ENCODE measurements at regions of chr7 and their contacts with region 1.

Region 1: DNA sequence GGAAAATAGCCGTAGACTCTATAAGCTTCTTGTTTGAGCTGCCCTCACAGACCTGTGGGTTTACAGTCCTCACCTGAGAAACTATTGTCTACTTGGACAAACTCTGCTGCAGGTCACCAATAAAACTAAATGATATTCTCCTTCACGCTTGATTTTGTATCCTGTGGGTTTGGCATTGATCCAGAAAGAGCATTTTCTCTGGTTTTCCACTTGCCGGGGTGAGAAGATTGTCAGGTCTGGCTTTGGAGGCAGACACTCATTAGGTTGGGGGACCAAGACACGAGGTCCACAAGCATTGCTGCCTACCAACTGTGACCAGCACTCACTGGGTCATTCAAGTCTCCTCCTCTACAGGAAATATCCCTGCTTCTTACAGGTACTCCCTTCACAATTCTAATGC is 68.5 kb downstream of the CDC14C start:
- DNase-seq: no peak
- H3K4me3 ChIP-seq: no peak overlapping the region
- H3K4me1 ChIP-seq: no peaks in the 10 kb centered on the region
- H3K27me3 ChIP-seq: no peaks in the 10 kb centered on the region

Region 2: DNA sequence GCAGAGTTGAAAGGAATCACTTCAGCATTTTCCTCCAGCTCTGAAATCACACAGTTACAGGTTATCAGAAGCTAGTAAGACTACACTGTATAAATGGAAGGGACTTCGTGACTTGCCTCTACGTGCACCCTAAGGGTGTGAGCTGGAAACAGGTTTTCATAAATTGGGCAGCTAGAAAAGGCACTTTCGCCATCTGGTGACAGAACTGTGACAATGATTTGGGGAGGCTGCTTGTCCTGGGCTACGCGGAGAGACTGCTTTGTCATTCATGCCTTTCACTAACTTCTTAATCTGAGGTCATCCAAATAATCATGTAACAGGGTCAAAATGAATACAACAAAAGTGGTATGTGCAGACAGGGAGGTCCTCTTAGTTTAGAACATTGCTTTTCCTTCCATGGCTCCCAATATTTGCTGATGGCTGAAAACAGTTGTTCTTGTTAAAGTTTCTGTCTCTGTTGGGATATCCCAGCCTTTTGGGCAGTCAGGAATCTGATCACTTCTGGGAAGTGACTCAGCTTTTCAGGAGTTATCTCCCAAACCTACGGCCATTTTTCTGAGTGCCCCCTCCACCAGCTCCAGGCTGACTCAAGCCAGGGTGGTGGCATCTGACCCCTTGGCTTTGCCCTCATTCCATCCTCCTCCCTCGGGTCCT is 798.4 kb after region 1 on chr7:
- in situ Hi-C with region 1: loop called (anchors 25 kb)
- DNase-seq: peak; percentile 50 to 56
- H3K4me3 ChIP-seq: no peak overlapping the region
- H3K4me1 ChIP-seq: no peaks in the 10 kb centered on the region; the same call in 1 of the 2 replicates
- H3K27me3 ChIP-seq: no peaks in the 10 kb centered on the region

Region 3: GRCh38 chr7:49852619-49853462 is 860.0 kb after region 1 on chr7:
- in situ Hi-C with region 1: loop called (anchors 25 kb)
- DNase-seq: peak; percentile 36 to 52
- H3K4me3 ChIP-seq: no peak overlapping the region
- H3K4me1 ChIP-seq: no peaks in the 10 kb centered on the region
- H3K27me3 ChIP-seq: no peaks in the 10 kb centered on the region

Measured in HAP-1 (cell line).